ENCODE measurements at regions of chr11 and their contacts with region 1.

Region 1: DNA sequence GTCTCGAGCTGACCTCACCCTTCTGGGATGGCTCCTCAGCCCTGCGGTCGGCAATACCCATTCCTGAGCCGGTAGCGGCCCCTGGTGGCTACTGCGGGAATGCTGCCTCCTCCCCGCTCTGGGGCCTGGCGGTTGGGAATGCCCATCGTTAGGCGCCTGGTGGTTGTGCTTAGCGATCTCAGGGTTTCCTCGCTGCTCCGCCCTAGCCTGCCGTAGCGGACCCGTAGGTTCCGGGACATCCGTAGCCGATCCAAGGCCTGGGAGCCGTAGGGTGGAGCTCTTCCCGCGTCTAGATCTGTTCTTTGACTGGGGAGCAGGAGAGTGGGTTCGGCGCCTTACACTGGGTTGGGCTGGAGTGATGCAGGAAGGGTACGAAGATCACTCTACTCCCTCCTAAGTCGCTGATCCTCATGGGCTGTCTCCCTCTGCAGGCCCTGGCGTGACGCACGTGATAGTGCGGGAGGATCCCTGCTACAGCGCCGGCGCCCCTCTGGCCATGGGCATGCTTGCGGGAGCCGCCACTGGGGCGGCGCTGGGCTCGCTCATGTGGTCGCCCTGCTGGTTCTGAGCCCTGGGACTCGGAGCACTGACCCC is 14.8 kb downstream of the PLEKHB1 start:
- DNase-seq: peak; percentile 86 to 99 (median 96)

Region 2: GRCh38 chr11:73307323-73308002 is 353.7 kb before region 1 on chr11:
- intact Hi-C with region 1: loop called (anchors 5 kb)
- DNase-seq: peak; percentile 90 to 99 (median 96)

Region 3: DNA sequence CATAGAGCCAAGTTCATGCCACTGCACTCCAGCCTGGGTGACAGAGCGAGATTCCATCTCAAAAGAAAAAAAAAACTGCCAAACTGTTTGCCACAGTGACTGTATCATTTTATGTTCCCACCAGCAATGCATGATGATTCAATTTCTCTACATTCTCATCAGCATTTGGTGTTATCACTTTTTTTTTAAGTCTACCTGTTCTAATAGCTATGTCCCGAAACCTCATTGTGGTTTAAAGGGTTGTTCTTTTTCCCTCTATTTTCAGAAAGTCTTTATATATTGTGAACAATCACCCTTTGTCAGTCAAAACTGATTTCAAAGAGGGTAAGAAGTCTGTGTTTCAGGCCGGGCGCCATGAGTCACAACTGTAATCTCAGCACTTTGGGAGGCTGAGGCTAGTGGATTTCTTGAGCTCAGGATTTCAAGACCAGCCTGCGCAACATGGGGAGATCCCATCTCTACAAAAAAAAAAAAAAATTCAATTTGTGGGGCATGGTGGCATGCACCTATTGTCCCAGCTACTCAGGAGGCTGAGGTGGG is 48.5 kb before region 1 on chr11:
- intact Hi-C with region 1: no loop called
- DNase-seq: no peak

Region 4: GRCh38 chr11:73625696-73626318 is 35.3 kb before region 1 on chr11:
- intact Hi-C with region 1: loop called (anchors 1 kb)
- DNase-seq: peak; percentile 61 to 96 (median 82)

Region 5: GRCh38 chr11:73889019-73889418 is 227.9 kb after region 1 on chr11:
- intact Hi-C with region 1: no loop called
- DNase-seq: no peak